ENCODE measurements at regions of chr1 and their contacts with region 1.

Region 1: GRCh38 chr1:200628223-200628881 is 7.8 kb upstream of the KIF14 start:
- DNase-seq: peak in 1 of 4 experiments; percentile 30
- ATAC-seq: peak; percentile 57
- H3K4me3 ChIP-seq: no peak overlapping the region
- H3K27ac ChIP-seq: no peak overlapping the region
- H3K4me1 ChIP-seq: peaks cover 0 to 10% of the 10 kb centered on the region in 2 experiments; a peak in 2 of 5 replicates
- H3K27me3 ChIP-seq: no peaks in the 10 kb centered on the region
- CTCF ChIP-seq: no peak
- EP300 ChIP-seq: no peak
- POLR2A ChIP-seq: no peak
- RAD21 ChIP-seq: no peak

Region 2: GRCh38 chr1:200738740-200739498 is 110.6 kb after region 1 on chr1 and contains the start of gene CAMSAP2:
- CTCF ChIA-PET with region 1: no interaction called
- POLR2A ChIA-PET with region 1: no interaction called
- in situ Hi-C with region 1: no loop called
- intact Hi-C with region 1: loop called (anchors 5 kb)
- DNase-seq: peak; percentile 90 to 97 (median 94)
- ATAC-seq: peak; percentile 95
- H3K4me3 ChIP-seq: peak within 1 kb of the TSS; percentile 69
- H3K27ac ChIP-seq: peak within 1 kb of the TSS; percentile 50; the same call in 2 of the 3 replicates
- H3K4me1 ChIP-seq: peaks cover 10 to 11% of the 10 kb centered on the region in 2 experiments; a peak in 3 of 5 replicates
- H3K27me3 ChIP-seq: no peaks in the 10 kb centered on the region
- CTCF ChIP-seq: no peak
- EP300 ChIP-seq: no peak
- POLR2A ChIP-seq: no peak; the same call in 1 of the 2 replicates
- RAD21 ChIP-seq: 0 out of 4 replicates have a peak, but pooled peaks of 1 of the 2 experiments have one; percentile 8
- polyA plus RNA-seq, gene CAMSAP2: 1.4 to 1.7 TPM

Region 3: GRCh38 chr1:201114236-201115131 is 486.1 kb after region 1 on chr1:
- CTCF ChIA-PET with region 1: no interaction called
- POLR2A ChIA-PET with region 1: no interaction called
- in situ Hi-C with region 1: no loop called
- intact Hi-C with region 1: no loop called
- DNase-seq: peak; percentile 83 to 85 (median 84)
- ATAC-seq: peak; percentile 98
- H3K4me3 ChIP-seq: no peak overlapping the region
- H3K27ac ChIP-seq: no peak overlapping the region
- H3K4me1 ChIP-seq: peaks cover 0 to 7% of the 10 kb centered on the region in 2 experiments; a peak in 2 of 5 replicates
- H3K27me3 ChIP-seq: peaks cover 20 to 51% of the 10 kb centered on the region in 2 experiments; a peak in 4 of 5 replicates
- CTCF ChIP-seq: peak; percentile 85 to 91 (median 90)
- EP300 ChIP-seq: no peak
- POLR2A ChIP-seq: no peak
- RAD21 ChIP-seq: peak; percentile 82 to 93